Activated CD4-positive, alpha-beta memory T cell treated with anti-CD3 and anti-CD28 coated beads, Interleukin-2, amount 10 ng/mL, durations not matched to agents 7 days and 5 days (primary cell): ENCODE measurements at regions of chr9 and their contacts with region 1.

Region 1: GRCh38 chr9:121545875-121546423 is 46.3 kb upstream of the GGTA1 start:
- DNase-seq: peak; percentile 74
- H3K4me3 Mint-ChIP-seq: no peak overlapping the region
- H3K27ac Mint-ChIP-seq: no peak overlapping the region
- H3K4me1 Mint-ChIP-seq: peaks cover under 1% of the 10 kb centered on the region
- H3K27me3 Mint-ChIP-seq: peaks cover 5% of the 10 kb centered on the region

Region 2: DNA sequence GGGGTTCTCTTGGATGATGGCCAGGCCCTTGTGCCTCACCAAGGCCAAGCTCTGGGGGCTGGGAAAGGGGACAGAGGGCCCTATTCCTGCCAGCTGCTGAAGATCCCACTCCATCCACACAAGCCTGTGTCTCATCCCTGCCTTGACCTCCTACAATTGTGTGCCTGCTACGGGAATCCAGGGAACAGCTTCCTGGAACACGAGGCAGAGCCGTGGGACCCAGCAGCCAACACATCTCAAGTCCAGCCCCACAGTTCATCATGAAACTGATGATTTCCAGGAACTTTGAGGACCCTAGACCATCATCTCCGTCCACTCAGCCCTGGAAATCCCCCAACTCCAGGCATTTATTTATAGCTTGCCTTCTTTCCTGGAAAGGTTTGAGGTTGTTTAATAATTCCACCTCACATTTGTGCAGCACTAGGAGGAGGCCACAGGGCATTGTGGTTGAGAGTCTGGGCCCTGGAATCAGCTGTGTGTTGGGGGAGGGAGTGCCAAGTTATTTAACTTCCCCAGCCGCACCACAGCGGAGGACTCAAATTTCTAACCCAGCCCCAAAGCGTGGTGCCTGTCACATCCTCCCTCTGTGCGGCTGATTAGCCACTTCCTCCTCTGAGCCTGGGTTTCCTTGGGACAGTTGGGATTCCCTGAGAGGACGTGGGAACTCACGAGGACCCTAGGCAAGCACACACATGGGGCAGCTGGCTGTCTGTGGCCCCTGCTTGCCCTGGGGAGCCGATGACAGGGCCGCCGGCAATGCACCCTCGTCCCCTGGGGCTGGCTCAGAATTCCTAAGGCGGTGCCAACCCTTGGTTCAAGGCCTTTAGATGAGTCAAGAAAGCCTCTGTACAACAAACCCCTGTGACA is 11.9 kb after region 1 on chr9:
- CTCF ChIA-PET with region 1: interaction called, 24 read pairs
- POLR2A ChIA-PET with region 1: no interaction called
- DNase-seq: peak; percentile 37
- H3K4me3 Mint-ChIP-seq: no peak overlapping the region
- H3K27ac Mint-ChIP-seq: no peak overlapping the region
- H3K4me1 Mint-ChIP-seq: peaks cover 14% of the 10 kb centered on the region
- H3K27me3 Mint-ChIP-seq: peaks cover 8% of the 10 kb centered on the region